ENCODE measurements at regions of chr13 and their contacts with region 1.

Region 1: DNA sequence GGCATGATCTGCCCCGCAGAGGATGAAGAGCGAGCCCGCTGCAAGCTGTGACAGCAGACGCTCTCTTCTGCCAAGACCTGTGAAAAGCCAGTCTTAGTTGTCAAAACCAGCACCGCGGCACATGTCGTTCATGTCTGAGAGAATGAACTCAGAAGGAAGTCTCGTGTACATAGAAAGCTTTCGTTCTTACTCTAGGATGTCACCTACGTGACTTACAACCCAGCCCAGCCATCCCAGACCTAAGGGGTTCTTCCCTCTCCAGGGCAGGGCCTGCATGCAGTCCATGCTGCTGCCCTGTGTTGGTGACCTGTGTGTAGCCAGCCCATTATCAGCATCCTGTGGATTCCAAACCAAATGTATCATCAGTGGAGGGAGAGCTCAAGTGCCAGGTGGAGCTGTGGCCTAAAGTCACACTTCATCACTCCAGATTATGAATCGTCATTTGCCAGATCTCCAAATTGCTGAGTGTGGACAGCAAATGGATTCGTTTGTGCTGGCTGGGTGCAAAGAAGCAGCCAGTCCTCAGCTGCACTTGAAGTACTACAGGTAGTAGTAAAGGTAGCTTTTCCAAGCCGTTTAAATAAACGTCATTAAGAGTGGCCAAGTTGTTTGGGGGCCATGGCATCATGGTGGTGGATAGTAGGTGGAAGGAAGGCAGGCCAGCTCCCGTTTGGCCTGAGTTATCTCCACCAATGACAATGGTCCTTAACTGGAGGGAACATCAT is 73.9 kb upstream of the GPR183 start:
- DNase-seq: peak; percentile 78
- ATAC-seq: peak; percentile 50
- H3K4me3 Mint-ChIP-seq: peak overlapping the region; percentile 43
- H3K27ac Mint-ChIP-seq: peak overlapping the region; percentile 93
- H3K4me1 Mint-ChIP-seq: peaks cover 92% of the 10 kb centered on the region
- H3K27me3 Mint-ChIP-seq: no peaks in the 10 kb centered on the region

Region 2: GRCh38 chr13:99356158-99357091 is 24.7 kb before region 1 on chr13:
- CTCF ChIA-PET with region 1: interaction called, 16 read pairs
- POLR2A ChIA-PET with region 1: interaction called, 14 read pairs
- DNase-seq: peak; percentile 86
- ATAC-seq: peak; percentile 81
- H3K4me3 Mint-ChIP-seq: peak overlapping the region; percentile 39
- H3K27ac Mint-ChIP-seq: peak overlapping the region; percentile 89
- H3K4me1 Mint-ChIP-seq: peaks cover 96% of the 10 kb centered on the region
- H3K27me3 Mint-ChIP-seq: no peaks in the 10 kb centered on the region